Endothelial cell of umbilical vein (primary cell): ENCODE measurements at regions of chr3 and their contacts with region 1.

Region 1: DNA sequence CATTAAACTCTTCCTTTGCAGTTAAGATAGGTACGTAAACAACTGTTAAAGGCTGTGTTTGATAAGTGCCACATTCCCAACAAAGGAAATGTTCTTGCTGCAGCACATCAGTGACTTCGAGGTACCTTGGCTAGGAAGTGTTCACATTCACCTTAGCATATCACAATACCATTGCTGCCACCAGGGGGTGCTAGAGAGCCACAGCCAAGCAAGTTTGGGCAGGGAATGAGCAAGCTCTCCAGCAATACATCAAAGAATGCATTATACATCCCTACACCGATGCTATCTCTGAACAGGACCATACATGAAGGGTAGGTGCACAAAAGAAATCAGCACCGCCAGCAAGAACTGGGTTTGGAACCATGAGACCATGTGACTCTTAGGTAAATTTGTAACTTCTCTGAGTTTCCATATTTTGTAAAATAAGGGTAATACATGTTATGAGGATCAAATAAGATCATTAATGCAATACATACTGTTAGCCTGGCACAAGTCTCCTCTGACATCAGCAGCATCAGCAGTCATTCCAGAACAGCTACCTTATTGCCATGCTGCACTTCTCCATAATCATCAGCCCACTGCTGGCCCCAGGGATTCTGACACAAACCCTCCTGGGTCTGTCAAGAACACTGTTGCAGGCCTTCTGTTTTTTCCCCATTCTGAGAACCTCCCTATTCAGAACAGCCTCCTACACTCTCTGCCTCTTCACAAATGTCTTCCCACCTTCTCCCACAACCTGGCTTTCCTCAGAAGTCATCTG is 37.6 kb downstream of the RYK start:
- DNase-seq: peak; percentile 81
- H3K4me3 ChIP-seq: no peak overlapping the region
- H3K27ac ChIP-seq: no peak overlapping the region
- H3K4me1 ChIP-seq: peaks cover 3% of the 10 kb centered on the region
- H3K27me3 ChIP-seq: no peaks in the 10 kb centered on the region
- CTCF ChIP-seq: peak; percentile 91
- POLR2A ChIP-seq: no peak

Region 2: DNA sequence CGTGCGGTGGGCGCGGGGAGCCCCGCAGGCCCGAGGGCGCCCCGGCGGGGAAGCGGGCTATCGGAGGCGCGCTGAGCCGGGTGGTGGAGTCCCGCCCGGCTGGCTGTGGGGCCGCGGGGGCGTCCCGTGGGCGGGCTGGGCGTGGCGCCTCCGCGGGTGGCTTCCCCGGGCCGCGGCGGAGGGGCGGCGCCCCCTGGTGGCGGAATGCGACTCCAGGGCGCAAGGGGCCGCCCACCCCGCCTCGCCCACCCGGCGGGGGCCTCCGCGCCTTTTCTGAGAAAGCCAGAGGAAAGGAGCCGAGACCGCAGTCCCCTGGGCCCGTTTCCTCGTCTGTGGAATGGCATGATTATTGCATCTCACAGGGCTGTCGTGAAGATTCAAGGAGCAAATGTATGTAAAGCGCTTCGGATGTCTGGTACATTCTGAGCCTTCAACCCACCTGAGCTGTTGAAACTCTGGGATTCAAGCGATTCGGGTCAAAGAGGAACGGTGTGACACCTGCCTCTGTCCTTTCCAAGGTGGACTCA is 285.5 kb before region 1 on chr3:
- CTCF ChIA-PET with region 1: interaction called, 223 read pairs
- POLR2A ChIA-PET with region 1: no interaction called
- dilution Hi-C with region 1: loop called (anchors 25 kb)
- intact Hi-C with region 1: loop called (anchors 1 kb)
- DNase-seq: peak; percentile 37
- H3K4me3 ChIP-seq: peak overlapping the region; percentile 32 to 53 (median 39)
- H3K27ac ChIP-seq: no peak overlapping the region
- H3K4me1 ChIP-seq: peaks cover 7% of the 10 kb centered on the region
- H3K27me3 ChIP-seq: no peaks in the 10 kb centered on the region
- CTCF ChIP-seq: peak; percentile 70 to 87
- POLR2A ChIP-seq: no peak

Region 3: DNA sequence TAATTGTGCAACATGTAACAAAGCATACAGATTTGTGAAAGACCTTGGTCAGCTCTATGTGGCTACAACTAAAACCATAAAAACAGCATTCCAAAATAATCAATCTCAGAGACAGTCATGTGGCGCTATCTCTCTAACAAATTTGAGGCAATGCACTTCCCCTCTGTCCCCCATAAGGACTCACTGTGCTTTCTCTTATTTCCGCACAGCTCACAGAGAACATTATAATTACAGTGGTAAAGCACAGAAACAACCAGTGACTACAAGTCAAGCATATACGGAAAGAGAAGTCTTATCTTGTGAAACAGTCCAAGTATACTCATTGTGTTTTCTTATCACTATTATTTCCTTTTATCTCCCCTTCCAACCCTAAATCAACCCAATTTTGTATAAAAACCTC is 26.7 kb before region 1 on chr3:
- CTCF ChIA-PET with region 1: interaction called, 11 read pairs
- POLR2A ChIA-PET with region 1: no interaction called
- dilution Hi-C with region 1: no loop called
- intact Hi-C with region 1: no loop called
- DNase-seq: peak; percentile 72
- H3K4me3 ChIP-seq: no peak overlapping the region
- H3K27ac ChIP-seq: peak overlapping the region; percentile 15
- H3K4me1 ChIP-seq: peaks cover 10% of the 10 kb centered on the region
- H3K27me3 ChIP-seq: no peaks in the 10 kb centered on the region
- CTCF ChIP-seq: no peak
- POLR2A ChIP-seq: no peak

Region 4: DNA sequence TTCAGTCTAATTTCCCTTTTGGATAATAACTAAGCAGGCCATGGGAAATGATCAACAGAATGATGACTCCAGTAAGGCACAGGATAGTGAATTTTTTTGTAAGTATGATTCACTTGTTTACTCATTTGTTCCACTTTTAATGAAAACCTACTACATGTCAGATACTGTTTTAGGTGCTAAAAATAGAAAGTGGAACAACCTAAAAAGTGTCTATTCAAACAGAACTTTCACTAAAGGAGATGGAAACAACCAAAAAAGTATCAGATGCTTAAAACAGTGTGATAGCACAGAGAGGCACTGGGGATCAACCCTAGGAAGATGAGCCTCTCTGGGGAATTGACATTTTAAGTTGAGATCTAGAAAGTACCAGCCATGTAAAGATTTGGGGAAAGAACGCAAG is 26.5 kb after region 1 on chr3:
- CTCF ChIA-PET with region 1: interaction called, 27 read pairs
- POLR2A ChIA-PET with region 1: no interaction called
- dilution Hi-C with region 1: no loop called
- intact Hi-C with region 1: no loop called
- DNase-seq: peak; percentile 26
- H3K4me3 ChIP-seq: no peak overlapping the region
- H3K27ac ChIP-seq: no peak overlapping the region
- H3K4me1 ChIP-seq: peaks cover 22% of the 10 kb centered on the region
- H3K27me3 ChIP-seq: no peaks in the 10 kb centered on the region
- CTCF ChIP-seq: no peak
- POLR2A ChIP-seq: no peak

Region 5: GRCh38 chr3:134373994-134374790 is 161.1 kb after region 1 on chr3 and contains the start of gene AMOTL2:
- CTCF ChIA-PET with region 1: interaction called, 14 read pairs
- POLR2A ChIA-PET with region 1: no interaction called
- dilution Hi-C with region 1: no loop called
- intact Hi-C with region 1: loop called (anchors 5 kb)
- DNase-seq: peak; percentile 93
- H3K4me3 ChIP-seq: peak within 1 kb of the TSS; percentile 65 to 93 (median 73)
- H3K27ac ChIP-seq: peak within 1 kb of the TSS; percentile 99
- H3K4me1 ChIP-seq: peaks cover 47% of the 10 kb centered on the region
- H3K27me3 ChIP-seq: no peaks in the 10 kb centered on the region
- CTCF ChIP-seq: no peak
- POLR2A ChIP-seq: peak; percentile 99
- total RNA-seq, gene AMOTL2: 145 and 167 TPM in 2 replicates